Caco-2 (cell line): ENCODE measurements at regions of chr10 and their contacts with region 1.

Region 1: GRCh38 chr10:22854935-22855421 is 72.9 kb upstream of the ARMC3 start:
- DNase-seq: no peak
- H3K4me3 ChIP-seq: no peak overlapping the region
- H3K4me3 Mint-ChIP-seq: no peak overlapping the region
- H3K27ac Mint-ChIP-seq: peak overlapping the region; percentile 8
- H3K4me1 ChIP-seq: peaks cover 38% of the 10 kb centered on the region
- H3K4me1 Mint-ChIP-seq: peaks cover 16% of the 10 kb centered on the region
- H3K27me3 ChIP-seq: no peaks in the 10 kb centered on the region
- H3K27me3 Mint-ChIP-seq: no peaks in the 10 kb centered on the region
- CTCF ChIP-seq: peak in 1 of 2 experiments; percentile 9

Region 2: DNA sequence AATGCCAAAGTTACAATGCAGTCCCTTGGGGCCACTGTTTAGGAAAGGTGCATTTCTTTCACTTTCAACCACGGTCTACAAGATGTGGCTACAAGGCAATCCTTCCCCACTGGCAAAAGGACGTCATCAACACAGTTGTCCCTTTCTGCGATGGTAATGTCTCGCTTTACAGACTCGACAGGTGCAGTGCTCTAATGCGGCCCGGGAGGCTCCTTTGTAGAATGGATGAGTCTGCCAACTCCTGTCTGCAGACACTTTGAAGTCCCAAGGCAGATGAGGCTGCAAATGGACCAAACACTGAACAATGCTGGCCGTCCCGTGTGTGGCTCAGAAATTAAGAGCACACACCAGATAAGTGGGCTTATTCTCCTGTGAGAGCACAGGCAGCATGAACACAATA is 274.3 kb before region 1 on chr10:
- CTCF ChIA-PET with region 1: no interaction called
- POLR2A ChIA-PET with region 1: no interaction called
- intact Hi-C with region 1: loop called (anchors 10 kb)
- DNase-seq: no peak
- H3K4me3 ChIP-seq: no peak overlapping the region
- H3K4me3 Mint-ChIP-seq: no peak overlapping the region
- H3K27ac Mint-ChIP-seq: no peak overlapping the region
- H3K4me1 ChIP-seq: peaks cover 5% of the 10 kb centered on the region; the same call in 1 of the 2 replicates
- H3K4me1 Mint-ChIP-seq: no peaks in the 10 kb centered on the region
- H3K27me3 ChIP-seq: no peaks in the 10 kb centered on the region
- H3K27me3 Mint-ChIP-seq: no peaks in the 10 kb centered on the region
- CTCF ChIP-seq: no peak

Region 3: DNA sequence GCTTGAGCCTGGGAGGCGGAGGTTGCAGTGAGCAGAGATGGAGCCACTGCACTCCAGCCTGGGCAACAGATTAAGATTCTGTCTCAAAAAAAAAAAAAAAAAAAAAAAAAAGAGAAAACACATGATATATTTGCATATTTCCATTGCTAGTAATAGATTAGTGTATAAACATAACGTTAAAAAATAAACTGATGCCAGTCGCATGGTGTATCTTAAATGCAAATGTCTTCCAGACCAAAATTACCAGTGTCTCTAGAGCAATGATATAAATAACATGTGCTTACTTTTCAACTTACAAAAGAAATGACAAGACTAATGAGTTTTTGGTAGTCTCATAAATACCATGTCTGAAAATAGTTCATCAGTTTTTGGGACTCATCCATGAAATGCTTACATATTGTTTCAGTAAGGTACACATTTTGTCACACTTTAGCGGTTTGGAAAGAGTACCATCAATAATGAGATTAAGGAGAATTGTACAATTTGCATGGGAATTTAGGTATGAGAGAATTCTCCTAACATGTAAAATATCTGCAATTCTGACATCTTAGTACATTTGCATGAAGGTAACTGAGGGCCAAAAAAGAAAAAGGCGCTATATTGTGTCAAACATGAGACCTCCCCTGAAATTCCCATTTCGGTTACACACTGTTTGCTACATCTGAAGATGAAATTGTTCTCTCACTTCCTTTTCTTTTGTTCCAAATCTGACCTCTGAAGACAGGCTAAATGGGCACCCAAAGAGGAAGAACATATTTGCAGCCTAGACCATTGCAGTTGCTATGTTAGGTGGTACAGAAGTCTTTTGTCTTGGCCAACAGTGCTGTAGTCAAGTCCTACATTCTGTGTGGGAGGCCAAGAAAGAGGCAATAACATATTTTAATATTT is 89.1 kb before region 1 on chr10:
- CTCF ChIA-PET with region 1: no interaction called
- POLR2A ChIA-PET with region 1: no interaction called
- intact Hi-C with region 1: loop called (anchors 10 kb)
- DNase-seq: no peak
- H3K4me3 ChIP-seq: no peak overlapping the region
- H3K4me3 Mint-ChIP-seq: no peak overlapping the region
- H3K27ac Mint-ChIP-seq: no peak overlapping the region
- H3K4me1 ChIP-seq: no peaks in the 10 kb centered on the region
- H3K4me1 Mint-ChIP-seq: peaks cover 22% of the 10 kb centered on the region
- H3K27me3 ChIP-seq: no peaks in the 10 kb centered on the region
- H3K27me3 Mint-ChIP-seq: no peaks in the 10 kb centered on the region
- CTCF ChIP-seq: no peak

Region 4: GRCh38 chr10:22795546-22795945 is 59.4 kb before region 1 on chr10:
- CTCF ChIA-PET with region 1: no interaction called
- POLR2A ChIA-PET with region 1: no interaction called
- intact Hi-C with region 1: no loop called
- DNase-seq: no peak
- H3K4me3 ChIP-seq: no peak overlapping the region
- H3K4me3 Mint-ChIP-seq: no peak overlapping the region
- H3K27ac Mint-ChIP-seq: no peak overlapping the region
- H3K4me1 ChIP-seq: no peaks in the 10 kb centered on the region
- H3K4me1 Mint-ChIP-seq: peaks cover 3% of the 10 kb centered on the region
- H3K27me3 ChIP-seq: no peaks in the 10 kb centered on the region
- H3K27me3 Mint-ChIP-seq: no peaks in the 10 kb centered on the region
- CTCF ChIP-seq: no peak